Transverse colon (tissue), 4 donors: ENCODE measurements at regions of chr16 and their contacts with region 1.

Region 1: GRCh38 chr16:23742766-23743165 is 12.1 kb upstream of the CHP2 start:
- DNase-seq: no peak
- H3K4me3 ChIP-seq: no peak overlapping the region
- H3K27ac ChIP-seq: no peak overlapping the region
- H3K4me1 ChIP-seq: peaks cover 0 to 7% (median 2%) of the 10 kb centered on the region in 4 donors
- H3K27me3 ChIP-seq: peaks cover 3% of the 10 kb centered on the region
- CTCF ChIP-seq: peak in 4 of 5 experiments; percentile 12 to 34 (median 16)
- EP300 ChIP-seq: no peak
- POLR2A ChIP-seq: no peak

Region 2: DNA sequence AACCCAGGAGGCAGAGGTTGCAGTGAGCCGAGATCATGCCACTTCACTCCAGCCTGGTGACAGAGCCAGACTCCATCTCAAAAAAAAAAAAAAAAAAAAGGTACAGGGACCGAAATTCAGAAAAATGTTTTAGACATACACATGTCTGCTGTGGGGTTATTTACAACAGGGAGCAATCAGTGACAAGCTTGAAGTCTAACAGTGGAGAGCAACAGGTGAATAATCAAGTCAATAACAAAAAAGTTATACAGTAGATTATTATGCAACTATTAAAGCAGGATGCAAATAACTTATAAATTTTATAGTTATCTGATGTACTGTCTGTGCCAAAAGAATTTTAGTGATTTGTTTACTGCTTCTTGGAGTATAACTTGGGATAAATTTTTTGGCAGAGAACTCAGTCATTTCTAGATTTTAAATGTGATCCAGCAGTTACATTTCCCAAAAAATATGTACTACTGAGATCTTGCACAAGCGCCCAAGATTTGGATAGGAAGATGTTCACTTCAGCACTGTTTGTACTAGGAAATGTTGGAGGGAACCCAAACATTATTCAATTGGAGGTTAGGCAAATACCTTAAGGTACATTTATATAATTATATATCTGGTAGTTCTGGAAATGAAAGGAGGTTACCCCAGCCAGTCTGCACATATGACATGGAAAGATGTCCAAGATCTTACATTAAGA is 1502.6 kb before region 1 on chr16:
- in situ Hi-C with region 1: no loop called
- intact Hi-C with region 1: no loop called
- DNase-seq: no peak
- H3K4me3 ChIP-seq: no peak overlapping the region
- H3K27ac ChIP-seq: peak overlapping the region; percentile 67 to 83 (median 72)
- H3K4me1 ChIP-seq: peaks cover 4 to 55% (median 22%) of the 10 kb centered on the region in 4 donors
- H3K27me3 ChIP-seq: no peaks in the 10 kb centered on the region
- CTCF ChIP-seq: no peak
- EP300 ChIP-seq: no peak
- POLR2A ChIP-seq: no peak

Region 3: GRCh38 chr16:23803591-23804123 is 60.9 kb after region 1 on chr16:
- in situ Hi-C with region 1: loop called in 1 of 4 experiments (anchors 10 kb)
- intact Hi-C with region 1: no loop called
- DNase-seq: peak; percentile 82
- H3K4me3 ChIP-seq: no peak overlapping the region
- H3K27ac ChIP-seq: no peak overlapping the region
- H3K4me1 ChIP-seq: peaks cover 0 to 23% (median 13%) of the 10 kb centered on the region in 4 donors
- H3K27me3 ChIP-seq: no peaks in the 10 kb centered on the region
- CTCF ChIP-seq: peak; percentile 33 to 66 (median 57)
- EP300 ChIP-seq: no peak
- POLR2A ChIP-seq: no peak

Region 4: DNA sequence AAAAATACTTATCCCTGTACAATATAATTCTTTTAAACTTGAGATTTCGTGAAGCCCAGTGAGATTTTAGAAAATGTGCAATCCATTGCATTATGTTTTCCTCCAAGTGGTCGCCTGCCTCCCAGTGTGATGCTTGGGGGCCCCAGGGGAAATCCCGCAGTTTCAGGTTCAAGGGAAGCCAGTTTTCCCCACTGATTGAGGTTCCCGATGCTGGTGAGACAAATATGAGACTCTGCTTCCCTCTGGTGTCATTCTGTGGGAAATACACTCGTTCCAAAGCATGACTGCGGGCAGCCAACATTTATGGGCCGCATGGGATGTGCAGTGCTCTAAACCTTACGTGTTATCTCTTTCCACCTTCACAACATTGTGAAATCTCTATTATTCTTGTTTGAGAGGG is 293.8 kb after region 1 on chr16:
- in situ Hi-C with region 1: loop called in 2 of 4 experiments (anchors 10 kb)
- intact Hi-C with region 1: loop called (anchors 5 kb)
- DNase-seq: peak; percentile 49
- H3K4me3 ChIP-seq: no peak overlapping the region
- H3K27ac ChIP-seq: no peak overlapping the region
- H3K4me1 ChIP-seq: peaks cover 0 to 14% (median 0%) of the 10 kb centered on the region in 4 donors
- H3K27me3 ChIP-seq: no peaks in the 10 kb centered on the region
- CTCF ChIP-seq: peak; percentile 62 to 86 (median 70)
- EP300 ChIP-seq: no peak
- POLR2A ChIP-seq: no peak